AG04450 (cell line): ENCODE measurements at regions of chr1 and their contacts with region 1.

Region 1: DNA sequence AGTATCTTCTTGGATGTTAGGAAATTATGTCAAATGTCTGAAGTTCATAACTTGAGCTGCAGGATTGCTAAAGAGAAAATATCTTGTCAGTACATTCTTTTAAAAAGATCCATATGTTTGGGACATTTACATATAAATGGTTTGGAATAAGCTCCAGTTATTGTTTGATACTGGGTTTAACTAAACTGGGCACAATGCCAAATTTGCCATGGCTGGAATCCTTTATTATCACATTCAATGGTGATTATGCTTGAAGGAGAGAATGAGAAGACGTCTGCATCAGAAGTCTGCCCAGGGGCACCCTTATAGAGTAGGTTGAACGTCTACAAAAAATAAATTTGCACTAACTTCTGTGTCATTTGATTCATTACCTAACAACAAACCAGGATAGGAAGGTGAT is 652.5 kb downstream of the AMY1C start:
- DNase-seq: no peak
- H3K4me3 ChIP-seq: no peak overlapping the region
- H3K27ac ChIP-seq: no peak overlapping the region
- H3K27me3 ChIP-seq: no peaks in the 10 kb centered on the region
- CTCF ChIP-seq: no peak

Region 2: GRCh38 chr1:104387716-104388508 is 14.3 kb before region 1 on chr1:
- CTCF ChIA-PET with region 1: no interaction called
- POLR2A ChIA-PET with region 1: no interaction called
- DNase-seq: no peak
- H3K4me3 ChIP-seq: no peak overlapping the region
- H3K27ac ChIP-seq: no peak overlapping the region
- H3K27me3 ChIP-seq: no peaks in the 10 kb centered on the region
- CTCF ChIP-seq: no peak

Region 3: DNA sequence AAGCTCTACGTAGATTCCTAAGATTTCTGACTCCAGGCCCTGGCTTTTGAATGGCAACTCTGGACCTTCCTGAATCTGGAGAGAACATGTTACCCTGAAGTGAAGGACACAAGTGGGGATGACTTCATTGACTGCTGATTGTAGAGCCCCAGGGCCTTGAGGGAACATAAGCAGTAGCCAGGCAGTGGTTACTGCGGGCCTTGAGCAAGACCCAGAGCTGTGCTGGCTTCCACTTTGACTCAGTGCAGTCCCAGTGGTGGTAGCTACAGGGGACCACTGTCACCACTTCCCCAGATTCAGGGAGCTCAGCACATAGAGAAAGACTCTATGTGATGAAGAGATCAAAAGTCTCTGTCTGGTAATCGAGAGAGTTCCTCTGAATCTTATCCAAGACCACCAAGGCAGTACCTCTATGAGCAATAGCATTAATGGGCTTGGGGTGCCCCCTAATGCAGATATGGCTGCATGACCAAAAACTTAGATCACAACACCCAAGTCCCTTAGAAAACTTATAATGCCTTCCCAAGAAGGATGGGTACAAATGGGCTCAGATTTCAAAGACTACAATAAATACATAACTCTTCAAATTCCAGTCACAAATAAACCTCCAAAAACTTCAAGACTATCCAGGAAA is 625.8 kb after region 1 on chr1:
- CTCF ChIA-PET with region 1: no interaction called
- POLR2A ChIA-PET with region 1: interaction called, 14 read pairs
- DNase-seq: no peak
- H3K4me3 ChIP-seq: no peak overlapping the region
- H3K27ac ChIP-seq: no peak overlapping the region
- H3K27me3 ChIP-seq: no peaks in the 10 kb centered on the region
- CTCF ChIP-seq: no peak